Activated B cell treated with CpG ODN at 0.5 μM for 24 hours (primary cell): ENCODE measurements at regions of chr2 and their contacts with region 1.

Region 1: DNA sequence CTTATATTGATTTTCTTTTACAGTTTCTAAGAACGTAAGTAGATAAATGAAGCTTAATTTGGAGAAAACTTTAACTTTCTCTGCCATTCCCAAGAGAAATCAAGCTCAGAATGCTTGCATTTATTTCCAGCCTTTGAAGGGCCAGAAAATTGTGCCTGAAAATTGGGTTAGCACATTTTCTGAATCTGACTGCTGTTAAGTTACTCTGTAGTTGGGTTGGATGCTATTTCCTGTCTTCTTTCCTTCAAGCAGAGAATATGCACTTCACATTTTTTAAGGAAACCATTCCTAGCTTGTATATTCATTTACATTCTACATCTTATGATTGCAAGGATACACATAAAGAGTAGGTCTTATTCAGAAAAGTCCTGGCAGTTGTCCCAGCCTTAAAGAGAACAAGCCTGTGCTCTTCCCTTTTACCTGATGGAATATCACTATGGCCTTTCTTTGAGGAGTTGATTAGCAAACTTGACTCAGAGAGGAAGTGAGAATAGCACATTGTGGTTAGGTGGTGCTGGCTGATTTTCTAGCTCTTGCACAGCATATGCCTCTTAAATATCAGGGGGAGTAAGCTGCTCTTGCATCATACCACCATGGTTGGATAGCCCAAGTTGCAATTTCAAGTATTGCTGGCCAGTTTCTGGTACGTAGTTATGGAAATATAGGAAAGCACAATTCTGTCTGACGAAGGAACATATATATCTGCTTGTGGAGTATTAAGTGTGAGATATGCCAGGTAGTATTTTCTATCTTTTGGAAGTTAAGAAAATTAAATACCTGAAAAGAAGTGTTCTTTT is 133.7 kb downstream of the COMMD1 start:
- DNase-seq: no peak
- ATAC-seq: peak; percentile 96
- H3K4me3 Mint-ChIP-seq: peak overlapping the region; percentile 64
- H3K27ac Mint-ChIP-seq: peak overlapping the region; percentile 86
- H3K4me1 Mint-ChIP-seq: peaks cover 30% of the 10 kb centered on the region
- H3K27me3 Mint-ChIP-seq: no peaks in the 10 kb centered on the region
- CTCF ChIP-seq: no peak

Region 2: GRCh38 chr2:61993444-61994024 is 45.6 kb before region 1 on chr2:
- CTCF ChIA-PET with region 1: no interaction called
- POLR2A ChIA-PET with region 1: no interaction called
- intact Hi-C with region 1: loop called (anchors 5 kb)
- DNase-seq: no peak
- ATAC-seq: peak; percentile 75
- H3K4me3 Mint-ChIP-seq: no peak overlapping the region
- H3K27ac Mint-ChIP-seq: no peak overlapping the region
- H3K4me1 Mint-ChIP-seq: peaks cover 2% of the 10 kb centered on the region
- H3K27me3 Mint-ChIP-seq: no peaks in the 10 kb centered on the region
- CTCF ChIP-seq: no peak

Region 3: GRCh38 chr2:62016957-62017356 is 22.2 kb before region 1 on chr2:
- CTCF ChIA-PET with region 1: no interaction called
- POLR2A ChIA-PET with region 1: no interaction called
- intact Hi-C with region 1: loop called (anchors 2 kb)
- DNase-seq: no peak
- ATAC-seq: no peak
- H3K4me3 Mint-ChIP-seq: no peak overlapping the region
- H3K27ac Mint-ChIP-seq: no peak overlapping the region
- H3K4me1 Mint-ChIP-seq: peaks cover 5% of the 10 kb centered on the region
- H3K27me3 Mint-ChIP-seq: no peaks in the 10 kb centered on the region
- CTCF ChIP-seq: no peak

Region 4: GRCh38 chr2:62071126-62071598 is 32.0 kb after region 1 on chr2:
- CTCF ChIA-PET with region 1: no interaction called
- POLR2A ChIA-PET with region 1: no interaction called
- intact Hi-C with region 1: loop called (anchors 1 kb)
- DNase-seq: no peak
- ATAC-seq: no peak
- H3K4me3 Mint-ChIP-seq: no peak overlapping the region
- H3K27ac Mint-ChIP-seq: no peak overlapping the region
- H3K4me1 Mint-ChIP-seq: peaks cover 3% of the 10 kb centered on the region
- H3K27me3 Mint-ChIP-seq: no peaks in the 10 kb centered on the region
- CTCF ChIP-seq: no peak

Region 5: GRCh38 chr2:62099523-62100175 is 60.5 kb after region 1 on chr2:
- CTCF ChIA-PET with region 1: no interaction called
- POLR2A ChIA-PET with region 1: interaction called, 3 read pairs
- intact Hi-C with region 1: loop called (anchors 1 kb)
- DNase-seq: peak; percentile 25
- ATAC-seq: peak; percentile 84
- H3K4me3 Mint-ChIP-seq: peak overlapping the region; percentile 73
- H3K27ac Mint-ChIP-seq: peak overlapping the region; percentile 86
- H3K4me1 Mint-ChIP-seq: peaks cover 36% of the 10 kb centered on the region
- H3K27me3 Mint-ChIP-seq: no peaks in the 10 kb centered on the region
- CTCF ChIP-seq: no peak